Heart left ventricle (tissue), 16 donors: ENCODE measurements at regions of chr2 and their contacts with region 1.

Region 1: DNA sequence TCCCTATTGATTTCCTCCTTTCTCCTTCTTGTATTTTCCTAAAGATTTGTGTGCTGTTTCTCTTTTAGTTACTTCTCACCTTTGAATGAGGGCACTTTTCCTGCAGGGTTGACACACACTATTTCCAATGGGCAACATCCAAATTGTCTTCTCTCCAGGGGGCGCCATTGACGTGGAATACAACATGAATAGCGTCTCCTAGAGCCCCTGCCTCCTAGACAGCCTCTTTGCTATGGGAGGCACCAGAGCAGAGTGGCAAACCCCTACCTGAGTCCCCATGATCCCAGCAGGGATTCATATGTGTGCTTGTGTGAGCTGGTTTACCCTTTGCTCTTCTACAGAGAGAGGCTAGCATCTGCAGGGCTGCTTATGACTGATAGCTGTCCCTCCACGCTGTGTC is 61.3 kb upstream of the ITSN2 start:
- DNase-seq: peak in 4 of 5 donors; percentile 56 to 72 (median 62)
- ATAC-seq: peak; percentile 55 to 85 (median 72)
- H3K4me3 ChIP-seq: no peak overlapping the region
- H3K27ac ChIP-seq: no peak overlapping the region
- H3K4me1 ChIP-seq: peaks cover 0 to 2% (median 0%) of the 10 kb centered on the region in 12 donors
- H3K27me3 ChIP-seq: no peaks in the 10 kb centered on the region
- CTCF ChIP-seq: peak in 11 of 12 donors; percentile 36 to 73 (median 65)
- POLR2A ChIP-seq: no peak

Region 2: GRCh38 chr2:24191848-24192247 is 229.8 kb before region 1 on chr2:
- intact Hi-C with region 1: no loop called
- DNase-seq: no peak
- ATAC-seq: no peak
- H3K4me3 ChIP-seq: no peak overlapping the region
- H3K27ac ChIP-seq: no peak overlapping the region
- H3K4me1 ChIP-seq: no peaks in the 10 kb centered on the region
- H3K27me3 ChIP-seq: no peaks in the 10 kb centered on the region
- CTCF ChIP-seq: no peak
- POLR2A ChIP-seq: no peak

Region 3: GRCh38 chr2:24228470-24228869 is 193.2 kb before region 1 on chr2:
- intact Hi-C with region 1: no loop called
- DNase-seq: no peak
- ATAC-seq: no peak
- H3K4me3 ChIP-seq: no peak overlapping the region
- H3K27ac ChIP-seq: no peak overlapping the region
- H3K4me1 ChIP-seq: no peaks in the 10 kb centered on the region
- H3K27me3 ChIP-seq: no peaks in the 10 kb centered on the region
- CTCF ChIP-seq: peak in 9 of 12 donors; percentile 20 to 52 (median 36)
- POLR2A ChIP-seq: no peak

Region 4: DNA sequence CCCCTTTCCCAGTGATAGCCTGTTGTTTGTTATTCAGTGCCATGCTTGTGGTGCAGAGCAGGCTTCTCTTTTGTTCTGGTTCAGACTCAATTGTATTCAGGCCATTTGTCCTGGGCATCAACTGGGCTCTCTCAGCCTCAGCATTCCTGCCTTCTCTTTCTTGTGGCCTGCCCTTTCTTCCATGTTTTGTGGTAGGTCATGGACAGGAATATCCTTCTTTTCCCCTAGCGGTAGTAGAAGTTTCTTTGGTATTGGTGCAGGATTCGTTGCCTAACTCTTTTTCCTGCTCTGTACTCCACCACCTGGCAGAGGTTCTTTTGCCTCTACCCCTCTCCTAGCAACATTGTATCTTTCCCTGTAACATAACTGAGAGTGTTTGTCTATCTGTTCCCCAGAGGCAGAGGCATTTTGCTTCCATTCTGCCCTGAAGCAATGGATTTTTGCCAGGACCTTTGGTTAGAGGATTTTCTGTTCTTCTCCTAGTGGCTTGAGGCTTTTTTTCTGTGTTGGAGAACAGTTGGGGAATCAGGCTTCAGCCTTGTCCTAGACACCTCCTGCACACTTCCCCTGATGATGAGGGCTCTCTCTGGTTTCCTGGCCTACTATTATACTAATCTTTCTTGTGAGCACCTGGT is 137.9 kb after region 1 on chr2:
- intact Hi-C with region 1: loop called in 1 of 10 experiments (anchors 10 kb)
- DNase-seq: no peak
- ATAC-seq: peak in 3 of 4 donors; percentile 29 to 72 (median 69)
- H3K4me3 ChIP-seq: no peak overlapping the region
- H3K27ac ChIP-seq: peak overlapping the region in 2 of 12 donors; percentile 13 to 19
- H3K4me1 ChIP-seq: peaks cover 0 to 43% (median 21%) of the 10 kb centered on the region in 12 donors
- H3K27me3 ChIP-seq: no peaks in the 10 kb centered on the region
- CTCF ChIP-seq: no peak
- POLR2A ChIP-seq: no peak

Region 5: DNA sequence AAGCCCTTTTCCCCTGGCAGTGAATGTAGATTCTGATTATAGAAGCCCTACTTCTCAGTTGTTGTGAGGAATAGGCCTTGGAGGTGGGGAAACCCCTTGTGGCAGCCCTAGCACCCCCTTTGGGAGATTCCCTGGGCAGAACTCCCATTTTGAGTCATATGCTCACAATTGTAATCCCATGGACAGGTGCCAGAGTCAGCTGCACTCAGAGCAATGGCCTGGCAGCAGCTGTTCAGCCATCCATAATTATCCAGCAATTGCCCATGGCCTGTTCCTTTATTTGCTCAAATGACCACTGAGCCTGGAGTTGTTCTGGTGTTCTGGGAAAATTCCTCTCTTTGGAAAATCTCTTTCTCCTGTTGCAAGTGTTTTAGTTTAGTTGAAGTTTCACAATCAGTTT is 299.8 kb after region 1 on chr2:
- intact Hi-C with region 1: loop called in 1 of 10 experiments (anchors 10 kb)
- DNase-seq: peak; percentile 66 to 89 (median 84)
- ATAC-seq: peak; percentile 90 to 98 (median 93)
- H3K4me3 ChIP-seq: no peak overlapping the region
- H3K27ac ChIP-seq: peak overlapping the region in 10 of 12 donors; percentile 5 to 55 (median 36)
- H3K4me1 ChIP-seq: peaks cover 0 to 40% (median 17%) of the 10 kb centered on the region in 12 donors
- H3K27me3 ChIP-seq: no peaks in the 10 kb centered on the region
- CTCF ChIP-seq: no peak
- POLR2A ChIP-seq: no peak